Panc1 (cell line): ENCODE measurements at regions of chr16 and their contacts with region 1.

Region 1: GRCh38 chr16:72129976-72130865 is 36.6 kb downstream of the DHX38 start:
- DNase-seq: no peak
- ATAC-seq: no peak
- H3K4me3 ChIP-seq: no peak overlapping the region
- H3K27ac ChIP-seq: no peak overlapping the region
- H3K4me1 ChIP-seq: no peaks in the 10 kb centered on the region
- H3K27me3 ChIP-seq: peaks cover 2% of the 10 kb centered on the region; the same call in 1 of the 2 replicates
- CTCF ChIP-seq: no peak

Region 2: DNA sequence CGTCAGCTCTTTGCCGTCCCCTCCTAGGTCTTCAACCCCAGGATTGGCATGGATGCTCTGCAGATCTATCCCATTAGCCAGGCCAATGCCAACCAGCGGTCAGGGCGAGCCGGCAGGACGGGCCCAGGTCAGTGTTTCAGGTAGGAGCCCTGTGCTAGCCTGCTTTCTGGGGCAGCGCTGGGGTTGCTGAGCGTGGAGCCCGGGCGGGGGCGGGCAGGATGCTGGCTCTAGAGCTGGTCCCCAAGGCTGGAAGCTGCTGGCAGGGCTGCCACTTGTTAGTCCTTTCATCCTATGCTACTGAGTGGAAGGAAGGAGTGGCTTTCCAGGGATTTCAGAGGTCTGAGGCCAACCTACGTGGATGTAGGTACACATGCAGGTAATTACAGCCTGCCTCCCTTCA is 24.2 kb before region 1 on chr16:
- CTCF ChIA-PET with region 1: interaction called, 10 read pairs
- POLR2A ChIA-PET with region 1: no interaction called
- in situ Hi-C with region 1: no loop called
- intact Hi-C with region 1: no loop called
- DNase-seq: no peak
- ATAC-seq: no peak
- H3K4me3 ChIP-seq: no peak overlapping the region
- H3K27ac ChIP-seq: no peak overlapping the region
- H3K4me1 ChIP-seq: no peaks in the 10 kb centered on the region
- H3K27me3 ChIP-seq: no peaks in the 10 kb centered on the region
- CTCF ChIP-seq: no peak

Region 3: DNA sequence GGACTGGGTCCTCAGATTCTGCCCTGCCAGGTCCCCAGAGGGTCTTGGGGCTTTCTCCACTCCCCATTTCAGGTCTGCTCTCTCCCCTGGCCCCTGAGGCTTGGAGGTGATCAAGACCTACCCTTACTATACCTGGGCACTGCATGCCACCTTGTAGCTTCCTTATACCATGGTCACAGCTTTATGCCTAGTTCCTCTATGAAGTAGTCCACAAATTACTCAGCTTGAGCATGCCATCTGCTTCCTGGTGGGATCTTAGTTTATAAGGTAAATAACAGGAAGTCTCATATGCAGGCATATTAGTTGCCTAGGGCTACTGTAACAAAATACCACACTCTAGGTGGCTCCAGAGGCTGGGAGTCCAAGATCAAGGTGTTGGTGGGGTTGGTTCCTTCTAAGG is 52.8 kb after region 1 on chr16:
- CTCF ChIA-PET with region 1: no interaction called
- POLR2A ChIA-PET with region 1: no interaction called
- in situ Hi-C with region 1: no loop called
- intact Hi-C with region 1: no loop called
- DNase-seq: no peak
- ATAC-seq: no peak
- H3K4me3 ChIP-seq: no peak overlapping the region
- H3K27ac ChIP-seq: no peak overlapping the region
- H3K4me1 ChIP-seq: no peaks in the 10 kb centered on the region
- H3K27me3 ChIP-seq: no peaks in the 10 kb centered on the region
- CTCF ChIP-seq: no peak